ENCODE measurements at regions of chr2 and their contacts with region 1.

Region 1: GRCh38 chr2:138548796-138549195 is 47.2 kb downstream of the SPOPL start:
- H3K4me3 ChIP-seq: no peak overlapping the region
- H3K27ac ChIP-seq: no peak overlapping the region
- H3K4me1 ChIP-seq: peaks cover 6% of the 10 kb centered on the region
- CTCF ChIP-seq: no peak

Region 2: DNA sequence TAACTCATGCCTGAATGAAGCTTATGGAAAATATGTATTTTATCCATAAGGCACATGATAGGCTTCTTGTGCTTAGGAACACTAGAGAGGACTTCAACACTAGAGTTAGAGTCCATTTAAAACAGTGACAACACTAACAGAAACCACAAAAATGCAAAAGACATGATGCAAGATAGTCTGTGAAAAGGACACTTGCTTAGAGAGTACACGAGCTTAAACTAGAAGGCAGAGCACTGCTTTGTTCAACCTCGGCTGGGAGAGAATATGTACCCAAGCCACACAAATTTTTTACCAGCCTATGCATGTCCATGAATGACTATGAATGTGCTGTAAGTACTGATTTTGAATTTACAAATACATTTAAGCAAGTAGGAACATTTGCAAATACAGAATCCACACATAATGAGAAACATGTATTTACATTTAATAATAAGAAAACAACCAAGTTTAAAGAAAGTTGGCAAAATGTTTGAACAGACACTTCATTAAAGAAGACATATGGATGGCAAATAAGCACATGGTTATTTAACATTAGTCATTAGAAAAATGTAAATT is 83.3 kb after region 1 on chr2:
- CTCF ChIA-PET with region 1: no interaction called
- POLR2A ChIA-PET with region 1: interaction called, 10 read pairs
- H3K4me3 ChIP-seq: no peak overlapping the region
- H3K27ac ChIP-seq: no peak overlapping the region
- H3K4me1 ChIP-seq: no peaks in the 10 kb centered on the region
- CTCF ChIP-seq: no peak